ENCODE measurements at regions of chr12 and their contacts with region 1.

Region 1: GRCh38 chr12:110449799-110450497 is at the start of gene ARPC3:
- DNase-seq: peak; percentile 95
- ATAC-seq: peak; percentile 97
- H3K4me3 Mint-ChIP-seq: peak within 1 kb of the TSS; percentile 100
- H3K27ac Mint-ChIP-seq: peak within 1 kb of the TSS; percentile 100
- H3K4me1 Mint-ChIP-seq: peaks cover 34% of the 10 kb centered on the region
- H3K27me3 Mint-ChIP-seq: no peaks in the 10 kb centered on the region
- total RNA-seq, gene ARPC3: 361 to 371 TPM

Region 2: DNA sequence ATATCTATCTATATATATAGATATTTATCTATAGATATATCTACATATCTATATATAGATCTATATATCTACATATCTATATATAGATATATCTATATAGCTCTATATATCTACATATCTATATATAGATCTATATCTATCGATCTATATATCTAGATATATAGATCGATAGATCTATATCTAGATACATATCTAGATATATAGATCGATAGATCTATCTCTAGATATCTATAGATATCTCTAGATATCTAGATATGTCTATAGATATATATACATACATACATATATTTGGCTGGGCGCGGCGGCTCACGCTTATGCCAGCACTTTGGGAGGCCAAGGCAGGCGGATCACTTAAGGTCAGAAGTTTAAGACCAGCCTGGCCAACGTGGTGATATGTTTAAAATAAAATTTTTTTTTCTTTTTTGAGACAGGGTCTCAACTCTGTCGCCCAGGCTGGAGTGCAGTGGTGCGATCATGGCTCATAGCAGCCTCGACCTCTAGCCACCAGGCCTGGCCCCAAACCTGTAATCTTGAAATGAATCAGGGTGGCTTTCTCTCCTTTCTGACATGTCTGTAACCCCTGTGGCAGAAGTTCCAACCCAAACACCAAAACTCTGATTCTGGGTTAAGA is 17.9 kb before region 1 on chr12:
- POLR2A ChIA-PET with region 1: interaction called, 26 read pairs
- DNase-seq: no peak
- ATAC-seq: no peak
- H3K4me3 Mint-ChIP-seq: no peak overlapping the region
- H3K27ac Mint-ChIP-seq: no peak overlapping the region
- H3K4me1 Mint-ChIP-seq: no peaks in the 10 kb centered on the region
- H3K27me3 Mint-ChIP-seq: no peaks in the 10 kb centered on the region

Region 3: GRCh38 chr12:110468212-110469048 is 18.5 kb after region 1 on chr12 and contains the starts of genes FAM216A and GPN3:
- POLR2A ChIA-PET with region 1: interaction called, 87 read pairs
- DNase-seq: peak; percentile 94
- ATAC-seq: peak; percentile 84
- H3K4me3 Mint-ChIP-seq: peak within 1 kb of the TSS; percentile 98
- H3K27ac Mint-ChIP-seq: peak within 1 kb of the TSS; percentile 92
- H3K4me1 Mint-ChIP-seq: peaks cover 30% of the 10 kb centered on the region
- H3K27me3 Mint-ChIP-seq: no peaks in the 10 kb centered on the region
- total RNA-seq, gene FAM216A: 20.0 to 21.6 TPM
- total RNA-seq, gene GPN3: 22.9 to 23.4 TPM

Region 4: DNA sequence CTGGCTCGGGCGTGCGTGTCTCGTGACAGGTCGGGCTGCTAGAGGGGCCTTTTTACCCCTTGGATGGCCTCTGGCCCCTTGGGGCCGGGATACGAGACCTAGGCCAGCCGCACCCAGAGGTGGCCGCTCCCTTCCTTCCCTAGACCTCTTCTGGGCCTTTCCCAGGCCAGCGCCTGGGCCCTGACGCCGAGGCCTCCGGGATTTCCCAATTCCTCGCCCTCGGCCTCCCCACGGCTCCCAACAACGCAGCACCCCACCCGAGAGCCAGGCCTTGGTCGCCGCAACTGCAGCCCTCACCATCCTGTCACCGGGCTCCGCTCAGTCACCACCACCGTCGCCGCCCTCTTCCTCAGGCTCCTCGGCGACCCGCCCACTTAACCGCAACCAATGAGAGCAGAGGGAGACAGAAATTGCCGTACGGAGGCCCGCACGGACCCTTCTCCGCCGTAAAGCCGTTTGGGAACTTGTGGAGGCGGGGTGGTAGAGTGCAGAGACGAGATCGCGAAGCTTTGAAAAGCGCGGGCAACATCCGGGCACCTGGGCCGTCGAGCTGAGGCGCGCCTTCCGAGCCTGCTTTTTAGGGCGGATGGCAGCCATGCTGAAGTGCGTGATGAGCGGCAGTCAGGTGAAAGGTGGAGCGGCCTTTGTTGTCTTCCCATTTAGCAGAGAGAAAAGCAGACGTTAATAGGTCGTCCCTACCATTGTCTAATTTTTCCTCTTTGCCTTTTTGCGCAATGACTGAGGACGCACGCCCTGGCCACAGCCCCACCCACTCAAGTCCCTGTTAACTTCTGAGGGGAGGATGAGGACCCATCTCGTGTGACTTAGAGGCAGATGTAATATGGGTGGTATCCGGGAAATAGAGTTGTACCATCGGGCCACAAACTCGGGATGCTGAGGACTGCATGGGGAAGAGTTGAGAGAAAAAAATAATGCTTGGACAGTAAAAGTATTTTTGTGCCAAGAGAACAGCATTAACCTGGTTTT is 52.1 kb after region 1 on chr12 and contains the starts of genes RAD9B and VPS29:
- POLR2A ChIA-PET with region 1: interaction called, 35 read pairs
- DNase-seq: peak; percentile 99
- ATAC-seq: peak; percentile 96
- H3K4me3 Mint-ChIP-seq: peak within 1 kb of the TSS; percentile 100
- H3K27ac Mint-ChIP-seq: peak within 1 kb of the TSS; percentile 100
- H3K4me1 Mint-ChIP-seq: peaks cover 29% of the 10 kb centered on the region
- H3K27me3 Mint-ChIP-seq: no peaks in the 10 kb centered on the region
- total RNA-seq, gene RAD9B: 1.8 to 2.3 TPM
- total RNA-seq, gene VPS29: 132 to 138 TPM

Region 5: DNA sequence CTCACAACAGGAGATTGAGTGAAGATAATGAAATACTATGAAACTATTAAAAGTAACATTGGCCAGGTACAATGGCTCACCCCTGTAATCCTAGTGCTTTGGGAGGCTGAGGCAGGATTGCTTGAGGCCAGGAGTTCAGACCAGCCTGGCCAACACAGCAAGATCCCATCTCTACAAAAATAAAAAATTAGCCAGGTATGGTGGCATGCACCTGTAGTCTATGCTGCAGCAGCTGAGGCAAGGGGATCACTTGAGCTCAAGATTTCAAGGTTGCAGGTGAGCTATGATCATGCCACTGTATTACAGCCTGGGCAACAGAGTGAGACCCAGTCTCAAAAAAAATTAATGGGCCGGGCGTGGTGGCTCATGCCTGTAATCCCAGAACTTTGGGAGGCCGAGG is 67.0 kb after region 1 on chr12:
- POLR2A ChIA-PET with region 1: no interaction called
- DNase-seq: no peak
- ATAC-seq: no peak
- H3K4me3 Mint-ChIP-seq: no peak overlapping the region
- H3K27ac Mint-ChIP-seq: no peak overlapping the region
- H3K4me1 Mint-ChIP-seq: peaks cover 4% of the 10 kb centered on the region
- H3K27me3 Mint-ChIP-seq: no peaks in the 10 kb centered on the region

Region 6: GRCh38 chr12:110583137-110584059 is 133.4 kb after region 1 on chr12 and contains the start of gene PPTC7:
- POLR2A ChIA-PET with region 1: interaction called, 11 read pairs
- DNase-seq: peak; percentile 91
- ATAC-seq: peak; percentile 95
- H3K4me3 Mint-ChIP-seq: peak within 1 kb of the TSS; percentile 94
- H3K27ac Mint-ChIP-seq: peak within 1 kb of the TSS; percentile 91
- H3K4me1 Mint-ChIP-seq: peaks cover 52% of the 10 kb centered on the region
- H3K27me3 Mint-ChIP-seq: no peaks in the 10 kb centered on the region
- total RNA-seq, gene PPTC7: 28.3 to 30.0 TPM

Region 7: DNA sequence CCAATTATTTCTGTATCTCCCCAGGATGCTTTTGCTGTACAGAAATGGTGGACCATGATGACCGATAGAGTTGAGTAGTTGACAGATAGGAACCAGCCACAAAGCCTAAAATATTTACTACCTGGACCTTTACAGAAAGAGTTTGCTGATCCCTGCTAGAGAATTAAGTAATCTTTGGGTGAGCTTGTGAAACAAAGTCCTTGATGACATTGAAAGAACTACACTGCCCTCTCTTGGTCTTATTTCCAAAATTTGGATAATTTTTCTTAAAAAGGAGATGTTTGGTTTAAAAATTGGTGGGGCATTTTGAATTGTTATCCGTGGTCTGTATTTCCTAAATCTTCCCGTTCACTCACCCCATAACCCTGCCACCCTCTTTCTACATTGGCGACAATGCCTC is 150.3 kb after region 1 on chr12:
- POLR2A ChIA-PET with region 1: interaction called, 34 read pairs
- DNase-seq: no peak
- ATAC-seq: peak; percentile 46
- H3K4me3 Mint-ChIP-seq: no peak overlapping the region
- H3K27ac Mint-ChIP-seq: no peak overlapping the region
- H3K4me1 Mint-ChIP-seq: peaks cover 10% of the 10 kb centered on the region
- H3K27me3 Mint-ChIP-seq: no peaks in the 10 kb centered on the region